ENCODE measurements at regions of chr7 and their contacts with region 1.

Region 1: GRCh38 chr7:75878769-75879611 is at the start of gene RHBDD2:
- DNase-seq: peak; percentile 91 to 94 (median 93)
- H3K4me3 ChIP-seq: peak within 1 kb of the TSS; percentile 90 to 95 (median 94)
- H3K4me3 Mint-ChIP-seq: peak within 1 kb of the TSS; percentile 89 to 97
- H3K27ac ChIP-seq: peak within 1 kb of the TSS in 1 of 2 donors; percentile 83
- H3K27ac Mint-ChIP-seq: peak within 1 kb of the TSS; percentile 79 to 97 (median 91)
- H3K4me1 ChIP-seq: peaks cover 47 to 54% of the 10 kb centered on the region in 2 donors
- H3K4me1 Mint-ChIP-seq: peaks cover 49% of the 10 kb centered on the region
- H3K27me3 ChIP-seq: no peaks in the 10 kb centered on the region
- H3K27me3 Mint-ChIP-seq: peaks cover 0 to 4% (median 3%) of the 10 kb centered on the region in 3 donors
- CTCF ChIP-seq: no peak
- polyA plus RNA-seq, gene RHBDD2: 34.1 to 54.6 (median 53.1) TPM

Region 2: GRCh38 chr7:76008156-76008687 is 129.2 kb after region 1 on chr7:
- intact Hi-C with region 1: loop called in 1 of 2 experiments (anchors 5 kb)
- DNase-seq: peak in 1 of 3 donors; percentile 34
- H3K4me3 ChIP-seq: no peak overlapping the region
- H3K4me3 Mint-ChIP-seq: no peak overlapping the region
- H3K27ac ChIP-seq: peak overlapping the region in 1 of 2 donors; percentile 70
- H3K27ac Mint-ChIP-seq: peak overlapping the region in 6 of 7 donors; percentile 51 to 95 (median 88)
- H3K4me1 ChIP-seq: peaks cover 23 to 24% of the 10 kb centered on the region in 2 donors
- H3K4me1 Mint-ChIP-seq: peaks cover 24% of the 10 kb centered on the region
- H3K27me3 ChIP-seq: no peaks in the 10 kb centered on the region
- H3K27me3 Mint-ChIP-seq: peaks cover 0 to 4% (median 2%) of the 10 kb centered on the region in 3 donors
- CTCF ChIP-seq: no peak